ENCODE measurements at regions of chr15 and their contacts with region 1.

Region 1: GRCh38 chr15:74598126-74598842 is 17.4 kb upstream of the CLK3 start:
- DNase-seq: peak; percentile 88
- H3K4me3 Mint-ChIP-seq: peak overlapping the region; percentile 98
- H3K27ac Mint-ChIP-seq: peak overlapping the region; percentile 98
- H3K4me1 Mint-ChIP-seq: peaks cover 23% of the 10 kb centered on the region
- H3K27me3 Mint-ChIP-seq: no peaks in the 10 kb centered on the region

Region 2: GRCh38 chr15:74438721-74439316 is 159.5 kb before region 1 on chr15:
- intact Hi-C with region 1: no loop called
- DNase-seq: peak; percentile 67
- H3K4me3 Mint-ChIP-seq: no peak overlapping the region
- H3K27ac Mint-ChIP-seq: peak overlapping the region; percentile 35
- H3K4me1 Mint-ChIP-seq: peaks cover 39% of the 10 kb centered on the region
- H3K27me3 Mint-ChIP-seq: no peaks in the 10 kb centered on the region

Region 3: GRCh38 chr15:74545880-74546656 is 52.2 kb before region 1 on chr15:
- intact Hi-C with region 1: loop called (anchors 1 kb)
- DNase-seq: peak; percentile 74
- H3K4me3 Mint-ChIP-seq: peak overlapping the region; percentile 59
- H3K27ac Mint-ChIP-seq: peak overlapping the region; percentile 81
- H3K4me1 Mint-ChIP-seq: peaks cover 61% of the 10 kb centered on the region
- H3K27me3 Mint-ChIP-seq: no peaks in the 10 kb centered on the region

Region 4: GRCh38 chr15:74615508-74616365 is 17.5 kb after region 1 on chr15 and contains the start of gene CLK3:
- intact Hi-C with region 1: loop called (anchors 2 kb)
- DNase-seq: peak; percentile 95
- H3K4me3 Mint-ChIP-seq: peak within 1 kb of the TSS; percentile 96
- H3K27ac Mint-ChIP-seq: peak within 1 kb of the TSS; percentile 97
- H3K4me1 Mint-ChIP-seq: peaks cover 28% of the 10 kb centered on the region
- H3K27me3 Mint-ChIP-seq: no peaks in the 10 kb centered on the region
- total RNA-seq, gene CLK3: 119 and 122 TPM in 2 replicates

Region 5: GRCh38 chr15:74781431-74782258 is 183.4 kb after region 1 on chr15 and contains the start of gene CSK:
- intact Hi-C with region 1: no loop called
- DNase-seq: peak; percentile 77
- H3K4me3 Mint-ChIP-seq: peak within 1 kb of the TSS; percentile 97
- H3K27ac Mint-ChIP-seq: peak within 1 kb of the TSS; percentile 99
- H3K4me1 Mint-ChIP-seq: peaks cover 66% of the 10 kb centered on the region
- H3K27me3 Mint-ChIP-seq: no peaks in the 10 kb centered on the region
- total RNA-seq, gene CSK: 261 and 266 TPM in 2 replicates